Sciatic nerve (tissue), 2 donors: ENCODE measurements at regions of chr17 and their contacts with region 1.

Region 1: DNA sequence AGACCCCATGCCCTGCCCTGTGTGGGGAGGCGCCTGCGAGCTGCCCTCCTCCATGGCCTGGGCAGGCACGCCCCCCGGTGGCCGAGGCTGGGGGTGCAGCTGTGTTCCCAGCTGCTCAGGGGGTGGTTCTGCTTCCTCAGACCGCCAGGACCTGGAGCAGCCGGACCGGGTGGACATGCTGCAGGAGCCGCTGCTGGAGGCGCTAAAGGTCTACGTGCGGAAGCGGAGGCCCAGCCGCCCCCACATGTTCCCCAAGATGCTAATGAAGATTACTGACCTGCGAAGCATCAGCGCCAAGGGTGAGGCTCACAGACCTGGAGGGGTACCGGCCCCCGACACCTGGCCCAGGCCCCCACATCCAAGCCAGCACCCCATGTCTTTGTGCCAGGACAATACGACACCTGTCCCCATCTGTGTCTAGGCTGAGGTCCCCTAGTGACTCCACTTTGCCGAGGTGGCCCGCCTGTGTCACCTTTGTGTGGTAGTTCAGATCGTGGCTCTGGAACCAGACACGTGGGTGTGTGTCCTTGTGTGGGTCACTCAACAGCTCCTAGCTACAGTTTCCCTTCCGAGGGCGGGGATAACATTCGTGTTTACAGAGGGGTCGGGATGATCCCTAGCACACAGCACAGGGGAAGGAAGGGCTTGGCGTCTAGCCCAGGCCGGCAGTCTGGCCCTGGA is 9.3 kb downstream of the GJD3 start:
- DNase-seq: peak; percentile 89
- ATAC-seq: peak; percentile 74

Region 2: GRCh38 chr17:39365242-39365641 is 990.0 kb before region 1 on chr17:
- intact Hi-C with region 1: no loop called
- DNase-seq: no peak
- ATAC-seq: peak; percentile 79

Region 3: DNA sequence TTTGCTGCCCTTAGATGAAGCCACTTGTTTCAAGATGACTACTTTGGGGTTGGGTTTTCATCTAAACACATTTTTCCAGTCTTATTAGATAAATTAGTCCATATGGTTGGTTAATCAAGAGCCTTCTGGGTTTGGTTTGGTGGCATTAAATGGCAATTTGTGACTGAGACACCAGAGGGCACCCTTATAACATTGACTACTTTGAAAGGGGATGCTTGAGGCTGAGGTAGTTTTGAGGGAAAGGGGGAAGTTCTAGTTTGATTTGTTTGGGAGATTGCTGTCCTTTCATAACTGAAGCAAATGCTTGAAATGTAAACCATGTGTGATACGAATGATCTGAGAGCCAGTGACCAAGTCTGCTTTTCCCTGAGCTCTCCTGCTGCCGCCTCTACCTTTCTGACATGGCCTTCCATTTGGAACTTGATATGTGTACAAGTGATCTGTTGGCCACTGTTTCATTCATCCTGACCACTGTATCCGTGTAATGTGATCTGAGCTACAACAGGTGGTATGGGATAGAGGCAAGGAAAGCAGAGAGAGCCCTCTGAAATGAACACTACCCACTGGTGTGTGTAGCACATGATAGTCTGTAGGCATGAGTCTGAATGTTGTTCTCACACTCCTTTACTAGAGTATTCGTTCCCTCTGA is 52.1 kb before region 1 on chr17:
- intact Hi-C with region 1: loop called (anchors 2 kb)
- DNase-seq: peak; percentile 63
- ATAC-seq: peak; percentile 66

Region 4: GRCh38 chr17:40559954-40560591 is 204.8 kb after region 1 on chr17:
- intact Hi-C with region 1: no loop called
- DNase-seq: peak; percentile 93
- ATAC-seq: peak; percentile 89